Head of caudate nucleus (tissue), 42 donors: ENCODE measurements at regions of chr4 and their contacts with region 1.

Region 1: DNA sequence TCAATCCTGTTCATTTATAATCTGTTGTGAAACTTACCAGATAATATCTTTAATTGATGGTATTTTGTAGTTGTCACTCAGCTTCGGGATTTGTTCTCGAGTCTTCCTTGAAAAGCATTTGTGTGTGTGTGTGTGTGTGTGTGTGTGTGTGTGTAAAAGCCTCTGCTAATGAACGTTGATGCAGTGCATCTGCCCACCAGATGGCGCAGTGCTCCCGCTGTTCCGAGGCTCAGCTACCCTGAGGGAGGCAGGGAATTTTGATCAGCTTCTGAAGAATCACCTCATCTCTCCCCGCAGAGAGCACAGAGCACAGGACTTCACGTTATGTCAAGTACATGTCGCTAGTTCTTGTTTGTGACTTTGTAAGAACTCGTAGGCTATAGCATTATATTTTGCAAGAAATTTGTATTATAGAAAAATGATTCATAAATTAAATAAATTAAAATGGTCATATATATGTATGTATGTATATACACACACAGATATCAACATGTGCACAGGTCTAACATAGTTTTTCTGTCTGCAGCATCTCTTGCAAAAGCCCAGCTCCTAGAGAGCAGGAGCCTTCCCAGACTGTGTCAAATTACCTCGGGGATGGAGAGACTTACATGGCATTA is 316.7 kb upstream of the IGFBP7 start:
- DNase-seq: peak; percentile 67 to 93 (median 85)

Region 2: GRCh38 chr4:57163530-57164459 is 263.1 kb before region 1 on chr4:
- intact Hi-C with region 1: loop called (anchors 5 kb)
- DNase-seq: peak; percentile 73 to 93 (median 86)